Natural killer cell (primary cell): ENCODE measurements at regions of chr12 and their contacts with region 1.

Region 1: GRCh38 chr12:111942557-111942956 is 70.4 kb downstream of the TMEM116 start:
- DNase-seq: no peak
- ATAC-seq: no peak
- H3K4me3 ChIP-seq: no peak overlapping the region
- H3K4me3 Mint-ChIP-seq: no peak overlapping the region
- H3K27ac ChIP-seq: no peak overlapping the region
- H3K27ac Mint-ChIP-seq: no peak overlapping the region
- H3K4me1 ChIP-seq: peaks cover 2% of the 10 kb centered on the region
- H3K4me1 Mint-ChIP-seq: no peaks in the 10 kb centered on the region
- H3K27me3 ChIP-seq: no peaks in the 10 kb centered on the region
- H3K27me3 Mint-ChIP-seq: no peaks in the 10 kb centered on the region
- CTCF ChIP-seq: no peak

Region 2: GRCh38 chr12:111673503-111673902 is 269.1 kb before region 1 on chr12:
- intact Hi-C with region 1: no loop called
- DNase-seq: peak in 1 of 2 donors; percentile 16
- ATAC-seq: no peak
- H3K4me3 ChIP-seq: no peak overlapping the region
- H3K4me3 Mint-ChIP-seq: no peak overlapping the region
- H3K27ac ChIP-seq: no peak overlapping the region
- H3K27ac Mint-ChIP-seq: no peak overlapping the region
- H3K4me1 ChIP-seq: no peaks in the 10 kb centered on the region
- H3K4me1 Mint-ChIP-seq: peaks cover 0 to 5% of the 10 kb centered on the region in 2 donors
- H3K27me3 ChIP-seq: no peaks in the 10 kb centered on the region
- H3K27me3 Mint-ChIP-seq: no peaks in the 10 kb centered on the region
- CTCF ChIP-seq: peak; percentile 15

Region 3: GRCh38 chr12:111998015-111998414 is 55.5 kb after region 1 on chr12:
- intact Hi-C with region 1: loop called (anchors 5 kb)
- DNase-seq: no peak
- ATAC-seq: no peak
- H3K4me3 ChIP-seq: no peak overlapping the region
- H3K4me3 Mint-ChIP-seq: no peak overlapping the region
- H3K27ac ChIP-seq: no peak overlapping the region
- H3K27ac Mint-ChIP-seq: no peak overlapping the region
- H3K4me1 ChIP-seq: peaks cover 39% of the 10 kb centered on the region
- H3K4me1 Mint-ChIP-seq: peaks cover 37 to 58% of the 10 kb centered on the region in 2 donors
- H3K27me3 ChIP-seq: no peaks in the 10 kb centered on the region
- H3K27me3 Mint-ChIP-seq: no peaks in the 10 kb centered on the region
- CTCF ChIP-seq: no peak

Region 4: DNA sequence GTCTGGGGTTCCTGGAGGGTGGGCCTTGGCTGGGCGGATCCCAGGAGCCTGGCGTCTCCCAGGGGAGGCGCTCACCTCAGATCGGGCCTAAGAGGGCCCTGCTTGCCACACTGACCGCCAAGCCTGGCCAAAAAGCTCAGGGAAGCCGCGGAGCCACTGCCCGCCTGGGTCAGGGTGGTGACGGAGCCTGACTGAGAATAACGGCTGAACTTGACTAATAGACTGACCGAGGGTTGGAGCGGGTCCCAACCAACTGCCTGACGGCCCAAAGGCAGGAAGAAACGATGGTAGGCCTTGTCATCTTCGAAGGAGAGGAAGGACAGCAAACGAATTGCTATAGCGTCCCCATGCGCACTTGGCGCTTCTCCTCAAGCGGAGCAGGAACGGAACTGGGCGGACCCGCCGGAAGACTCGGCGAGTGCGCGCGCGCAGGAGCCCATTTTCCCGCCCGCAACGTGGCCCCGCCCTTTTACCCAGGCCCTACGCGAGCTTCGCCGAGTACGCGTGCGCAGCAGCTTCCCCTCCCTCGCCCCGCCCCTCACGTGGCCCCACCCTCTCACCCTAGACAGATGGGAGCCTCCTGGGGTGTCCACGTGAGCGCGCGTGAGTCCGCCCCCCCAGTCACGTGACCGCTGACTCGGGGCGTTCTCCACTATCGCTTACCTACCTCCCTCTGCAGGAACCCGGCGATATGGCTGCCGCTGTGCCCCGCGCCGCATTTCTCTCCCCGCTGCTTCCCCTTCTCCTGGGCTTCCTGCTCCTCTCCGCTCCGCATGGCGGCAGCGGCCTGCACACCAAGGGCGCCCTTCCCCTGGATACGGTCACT is 70.4 kb after region 1 on chr12 and contains the starts of genes ERP29 and TMEM116:
- intact Hi-C with region 1: loop called (anchors 1 kb)
- DNase-seq: peak; percentile 99 to 100
- ATAC-seq: peak; percentile 87 to 95 (median 90)
- H3K4me3 ChIP-seq: peak within 1 kb of the TSS; percentile 74
- H3K4me3 Mint-ChIP-seq: peak within 1 kb of the TSS; percentile 86
- H3K27ac ChIP-seq: peak within 1 kb of the TSS; percentile 93
- H3K27ac Mint-ChIP-seq: peak within 1 kb of the TSS; percentile 93 to 96
- H3K4me1 ChIP-seq: peaks cover 40% of the 10 kb centered on the region
- H3K4me1 Mint-ChIP-seq: peaks cover 39 to 54% of the 10 kb centered on the region in 2 donors
- H3K27me3 ChIP-seq: no peaks in the 10 kb centered on the region
- H3K27me3 Mint-ChIP-seq: no peaks in the 10 kb centered on the region
- CTCF ChIP-seq: peak; percentile 71
- total RNA-seq, gene ERP29: 51.6 to 74.9 (median 57.8) TPM
- total RNA-seq, gene TMEM116: 6.5 to 10.2 (median 10.1) TPM

Region 5: GRCh38 chr12:112125250-112125999 is 182.9 kb after region 1 on chr12 and contains the start of gene TRAFD1:
- intact Hi-C with region 1: loop called (anchors 10 kb)
- DNase-seq: peak; percentile 98 to 99
- ATAC-seq: peak; percentile 97 to 100 (median 98)
- H3K4me3 ChIP-seq: peak within 1 kb of the TSS; percentile 95
- H3K4me3 Mint-ChIP-seq: peak within 1 kb of the TSS; percentile 90
- H3K27ac ChIP-seq: peak within 1 kb of the TSS; percentile 92
- H3K27ac Mint-ChIP-seq: peak within 1 kb of the TSS; percentile 89 to 96
- H3K4me1 ChIP-seq: peaks cover 37% of the 10 kb centered on the region
- H3K4me1 Mint-ChIP-seq: peaks cover 18 to 28% of the 10 kb centered on the region in 2 donors
- H3K27me3 ChIP-seq: no peaks in the 10 kb centered on the region
- H3K27me3 Mint-ChIP-seq: peaks cover 4 to 7% of the 10 kb centered on the region in 2 donors
- CTCF ChIP-seq: no peak
- total RNA-seq, gene TRAFD1: 35.8 to 45.3 (median 45.2) TPM

Region 6: DNA sequence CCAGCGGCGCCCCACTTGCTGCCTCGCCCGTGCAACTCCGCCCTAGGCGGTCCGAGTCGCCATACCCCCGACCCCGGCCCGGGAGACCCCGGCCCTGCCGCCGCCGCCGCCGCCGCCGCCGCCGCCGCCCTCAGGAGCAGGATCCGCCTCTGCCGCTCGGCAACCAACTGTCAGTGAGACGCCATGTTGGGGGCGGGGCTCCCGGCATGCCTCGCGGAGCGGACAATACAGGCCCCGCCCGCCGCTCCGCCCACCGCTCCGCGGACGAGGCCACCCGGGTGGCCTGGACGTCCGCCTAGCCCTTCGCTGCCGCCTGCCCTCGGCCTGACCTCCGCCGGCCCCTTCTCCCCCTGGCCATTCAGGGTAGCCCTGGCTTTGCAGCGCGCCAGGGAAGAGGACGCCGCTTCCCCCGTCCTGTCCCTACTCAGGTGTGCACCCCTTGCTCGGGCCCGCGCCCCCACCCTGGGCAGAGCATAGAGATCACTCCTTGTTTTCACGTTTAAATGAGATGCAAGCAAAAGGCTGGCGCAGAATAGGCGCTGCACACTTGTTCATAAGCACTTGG is 439.8 kb after region 1 on chr12 and contains the start of gene HECTD4:
- intact Hi-C with region 1: loop called (anchors 5 kb)
- DNase-seq: peak; percentile 91 to 94
- ATAC-seq: peak; percentile 96 to 99 (median 97)
- H3K4me3 ChIP-seq: peak within 1 kb of the TSS; percentile 51
- H3K4me3 Mint-ChIP-seq: peak within 1 kb of the TSS; percentile 99
- H3K27ac ChIP-seq: peak within 1 kb of the TSS; percentile 52
- H3K27ac Mint-ChIP-seq: peak within 1 kb of the TSS; percentile 89 to 96
- H3K4me1 ChIP-seq: peaks cover 21% of the 10 kb centered on the region
- H3K4me1 Mint-ChIP-seq: peaks cover 25 to 28% of the 10 kb centered on the region in 2 donors
- H3K27me3 ChIP-seq: no peaks in the 10 kb centered on the region
- H3K27me3 Mint-ChIP-seq: peaks cover 0 to under 1% of the 10 kb centered on the region in 2 donors
- CTCF ChIP-seq: no peak
- total RNA-seq, gene HECTD4: 66.9 to 82.6 (median 79.2) TPM